Activated CD8-positive, alpha-beta T cell treated with anti-CD3 and anti-CD28 coated beads for 36 hours (primary cell): ENCODE measurements at regions of chr17 and their contacts with region 1.

Region 1: GRCh38 chr17:40026816-40027613 is 11.8 kb downstream of the CSF3 start:
- DNase-seq: peak; percentile 83
- ATAC-seq: peak; percentile 93
- H3K4me3 Mint-ChIP-seq: no peak overlapping the region
- H3K27ac Mint-ChIP-seq: no peak overlapping the region
- H3K4me1 Mint-ChIP-seq: peaks cover 16% of the 10 kb centered on the region
- H3K27me3 Mint-ChIP-seq: no peaks in the 10 kb centered on the region
- CTCF ChIP-seq: peak; percentile 92

Region 2: DNA sequence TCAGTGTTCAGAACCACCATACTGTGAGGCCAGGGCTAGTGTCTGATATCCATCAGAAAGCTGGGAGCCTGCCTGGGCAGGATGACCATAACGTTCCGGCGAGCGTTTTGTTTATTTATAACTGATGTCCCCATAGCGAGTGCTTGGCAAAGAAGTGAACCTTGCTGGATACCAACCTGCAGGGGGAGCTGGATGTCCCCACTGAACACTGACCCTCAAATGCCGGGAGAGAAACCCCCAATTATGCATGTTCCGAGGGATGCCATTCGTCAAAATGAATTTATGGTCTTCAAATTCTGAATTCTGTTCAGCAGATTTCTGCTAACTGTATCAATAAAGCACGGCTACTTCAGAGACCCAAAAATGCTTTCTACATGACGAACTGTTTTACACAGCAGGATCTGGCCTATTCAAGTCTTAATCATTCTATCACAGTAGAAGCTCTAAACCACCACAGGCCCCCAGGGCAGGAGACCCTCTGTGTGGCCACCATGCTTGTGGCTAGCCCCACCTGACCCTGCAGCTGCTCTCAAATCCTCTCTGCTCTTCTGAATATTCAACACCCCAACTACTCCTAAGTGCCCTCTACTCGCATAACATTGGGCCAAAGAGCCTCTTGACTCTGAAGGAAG is 12.0 kb after region 1 on chr17:
- CTCF ChIA-PET with region 1: interaction called, 57 read pairs
- POLR2A ChIA-PET with region 1: interaction called, 3 read pairs
- intact Hi-C with region 1: no loop called
- DNase-seq: no peak
- ATAC-seq: no peak
- H3K4me3 Mint-ChIP-seq: no peak overlapping the region
- H3K27ac Mint-ChIP-seq: no peak overlapping the region
- H3K4me1 Mint-ChIP-seq: no peaks in the 10 kb centered on the region
- H3K27me3 Mint-ChIP-seq: no peaks in the 10 kb centered on the region
- CTCF ChIP-seq: peak; percentile 28

Region 3: DNA sequence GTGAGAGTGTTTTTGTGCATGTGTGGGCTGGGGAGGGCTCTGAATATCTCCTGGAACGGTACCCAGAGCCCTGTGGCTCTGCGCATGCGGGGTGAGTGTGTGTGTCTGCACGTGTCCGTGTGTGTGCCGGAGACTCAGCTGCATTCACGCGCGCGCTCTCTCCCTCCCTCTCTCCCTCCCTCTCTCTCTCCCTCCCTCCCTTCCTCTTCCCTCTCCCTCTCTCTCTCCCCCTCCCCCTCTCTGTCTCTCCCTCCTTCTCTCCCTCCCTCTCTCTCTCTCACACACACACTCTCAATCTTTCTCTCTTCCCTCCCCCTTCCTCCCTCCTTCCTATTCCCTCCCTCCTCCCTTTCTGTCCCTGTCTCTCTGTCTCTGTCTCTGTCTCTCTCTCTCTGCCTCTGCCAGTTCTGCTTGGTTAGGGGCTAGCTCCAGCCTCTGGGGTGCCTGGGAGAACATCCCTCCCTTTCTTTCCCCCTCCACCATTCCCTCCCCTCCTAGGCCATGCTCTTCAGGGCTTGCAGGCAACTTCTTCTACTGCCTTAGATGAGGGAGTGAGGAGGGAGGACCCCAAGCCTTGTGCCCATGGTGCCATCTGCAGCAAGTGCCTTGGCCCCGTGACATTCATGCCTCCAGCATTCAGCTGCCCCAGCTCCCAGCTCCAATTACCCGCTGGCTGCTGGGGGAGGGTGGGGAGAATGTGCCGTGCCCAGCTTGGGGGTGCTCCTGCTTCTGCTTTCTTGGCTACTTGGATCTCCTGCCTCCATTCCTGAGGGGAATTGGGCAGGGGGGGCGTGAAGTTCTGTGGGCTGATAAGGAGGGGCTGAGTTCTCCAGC is 42.1 kb after region 1 on chr17:
- CTCF ChIA-PET with region 1: interaction called, 10 read pairs
- POLR2A ChIA-PET with region 1: no interaction called
- intact Hi-C with region 1: no loop called
- DNase-seq: peak; percentile 90
- ATAC-seq: peak; percentile 66
- H3K4me3 Mint-ChIP-seq: peak overlapping the region; percentile 78
- H3K27ac Mint-ChIP-seq: peak overlapping the region; percentile 96
- H3K4me1 Mint-ChIP-seq: peaks cover 79% of the 10 kb centered on the region
- H3K27me3 Mint-ChIP-seq: no peaks in the 10 kb centered on the region
- CTCF ChIP-seq: no peak